ENCODE measurements at regions of chr16 and their contacts with region 1.

Region 1: GRCh38 chr16:70298988-70299938 is at the start of gene DDX19B:
- DNase-seq: peak; percentile 91 to 95
- ATAC-seq: peak; percentile 94
- H3K4me3 ChIP-seq: peak within 1 kb of the TSS; percentile 93
- H3K27ac ChIP-seq: peak within 1 kb of the TSS; percentile 90 to 96
- H3K4me1 ChIP-seq: no peaks in the 10 kb centered on the region
- H3K27me3 ChIP-seq: no peaks in the 10 kb centered on the region
- total RNA-seq, gene DDX19B: 19.4 to 28.0 TPM

Region 2: GRCh38 chr16:70348991-70349390 is 49.7 kb after region 1 on chr16:
- intact Hi-C with region 1: loop called in 1 of 2 experiments (anchors 5 kb)
- DNase-seq: no peak
- ATAC-seq: no peak
- H3K4me3 ChIP-seq: no peak overlapping the region
- H3K27ac ChIP-seq: no peak overlapping the region
- H3K4me1 ChIP-seq: no peaks in the 10 kb centered on the region
- H3K27me3 ChIP-seq: no peaks in the 10 kb centered on the region

Region 3: DNA sequence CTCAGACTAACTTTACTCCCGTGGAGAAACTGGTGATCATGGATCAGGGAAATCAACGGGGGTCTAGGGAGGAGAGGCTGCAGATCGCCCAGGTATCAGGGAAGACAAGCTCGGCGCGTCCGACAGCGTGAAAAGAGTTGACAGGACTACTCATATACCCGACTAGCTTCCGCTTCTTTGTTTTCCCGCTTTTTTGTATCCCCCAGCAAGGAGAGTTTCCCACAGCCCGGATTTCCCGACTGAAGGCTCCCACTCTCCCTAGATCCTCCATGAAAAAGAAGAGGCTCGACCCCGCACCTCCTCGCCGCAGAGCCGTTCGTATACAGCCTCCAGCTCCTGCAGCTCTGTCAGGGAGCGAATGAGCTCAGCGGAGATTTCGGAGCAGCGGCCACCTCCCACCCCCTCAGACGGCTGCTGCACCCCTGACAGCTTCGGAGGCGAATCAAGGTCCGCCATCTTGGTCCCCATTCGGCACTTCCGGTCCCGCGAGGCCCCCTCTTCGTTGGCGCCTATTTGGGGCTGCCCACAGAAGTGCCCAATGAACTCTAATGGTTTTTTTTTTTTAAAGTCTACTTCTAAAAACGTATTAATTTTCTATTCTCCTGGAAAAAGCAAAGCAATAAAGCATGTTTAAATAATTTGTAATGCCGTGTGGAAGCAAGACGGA is 223.9 kb after region 1 on chr16 and contains the start of gene COG4:
- intact Hi-C with region 1: no loop called
- DNase-seq: peak; percentile 93 to 95
- ATAC-seq: peak; percentile 96
- H3K4me3 ChIP-seq: peak within 1 kb of the TSS; percentile 85 to 94
- H3K27ac ChIP-seq: peak within 1 kb of the TSS; percentile 75 to 77
- H3K4me1 ChIP-seq: peaks cover 0 to 5% of the 10 kb centered on the region in 2 donors
- H3K27me3 ChIP-seq: no peaks in the 10 kb centered on the region
- total RNA-seq, gene COG4: 35.7 to 44.6 TPM

Measured in aorta (tissue), 5 donors.